ENCODE measurements at regions of chr17 and their contacts with region 1.

Region 1: DNA sequence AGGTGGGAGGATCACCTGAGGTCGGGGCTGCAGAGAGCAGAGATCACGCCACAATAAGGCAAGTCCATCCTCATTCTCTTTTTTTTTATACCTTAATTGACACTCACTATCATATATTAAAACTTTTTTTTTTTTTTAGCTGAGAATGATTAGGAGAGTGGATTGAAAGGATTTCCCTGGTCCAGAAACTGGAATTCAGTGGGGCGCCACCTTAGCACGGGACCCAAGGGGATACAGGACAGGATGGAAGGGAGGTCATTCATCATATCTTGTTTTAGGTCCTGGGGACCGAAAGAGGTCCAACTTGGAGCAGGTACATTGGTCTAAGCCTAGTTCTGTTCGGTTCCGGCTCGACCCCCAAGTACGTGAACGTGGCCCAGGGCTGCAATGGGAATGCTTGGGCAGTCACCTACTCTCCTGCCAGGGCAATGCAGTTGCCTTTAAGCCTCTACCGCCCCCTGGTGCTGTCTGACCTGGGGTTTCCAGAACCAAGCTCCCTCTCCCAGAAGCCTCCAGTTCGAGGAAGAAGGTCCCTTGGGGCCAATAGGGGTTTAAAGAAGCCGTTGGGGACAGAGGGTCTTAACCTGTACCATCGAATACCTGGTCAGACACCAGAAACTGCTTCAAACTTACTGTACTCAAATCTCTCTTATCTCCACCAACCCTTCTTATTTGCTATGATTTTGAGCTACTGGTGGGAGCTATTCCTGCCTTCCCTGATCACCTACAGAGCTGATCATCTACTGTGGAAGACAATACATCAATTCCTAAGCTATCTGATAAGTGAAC is 19.9 kb upstream of the GPATCH8 start:
- DNase-seq: peak; percentile 92
- H3K4me3 Mint-ChIP-seq: no peak overlapping the region
- H3K27ac Mint-ChIP-seq: peak overlapping the region; percentile 22
- H3K4me1 Mint-ChIP-seq: no peaks in the 10 kb centered on the region
- H3K27me3 Mint-ChIP-seq: peaks cover 19% of the 10 kb centered on the region
- CTCF ChIP-seq: peak; percentile 85

Region 2: GRCh38 chr17:44400226-44400847 is 122.7 kb before region 1 on chr17:
- CTCF ChIA-PET with region 1: interaction called, 4 read pairs
- intact Hi-C with region 1: loop called (anchors 2 kb)
- DNase-seq: peak; percentile 26
- H3K4me3 Mint-ChIP-seq: no peak overlapping the region
- H3K27ac Mint-ChIP-seq: peak overlapping the region; percentile 30
- H3K4me1 Mint-ChIP-seq: no peaks in the 10 kb centered on the region
- H3K27me3 Mint-ChIP-seq: no peaks in the 10 kb centered on the region
- CTCF ChIP-seq: no peak

Region 3: DNA sequence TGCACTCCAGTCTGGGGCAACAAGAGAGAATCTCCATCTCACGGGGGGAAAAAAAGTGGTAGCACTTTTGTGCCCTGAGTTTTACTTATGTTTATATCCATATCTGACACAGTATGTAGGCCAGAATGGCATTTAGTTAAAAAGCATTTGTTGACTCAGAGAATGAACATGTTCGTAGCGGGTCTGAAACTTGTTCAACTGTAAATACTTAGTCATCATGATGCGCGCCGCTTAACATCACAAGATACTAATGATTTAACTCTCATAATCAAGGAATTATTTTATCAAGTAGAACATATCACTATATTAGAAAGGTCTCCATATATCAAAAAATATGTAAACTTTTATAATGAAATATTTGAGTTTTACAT is 78.4 kb before region 1 on chr17:
- CTCF ChIA-PET with region 1: interaction called, 10 read pairs
- intact Hi-C with region 1: no loop called
- DNase-seq: no peak
- H3K4me3 Mint-ChIP-seq: no peak overlapping the region
- H3K27ac Mint-ChIP-seq: no peak overlapping the region
- H3K4me1 Mint-ChIP-seq: no peaks in the 10 kb centered on the region
- H3K27me3 Mint-ChIP-seq: no peaks in the 10 kb centered on the region
- CTCF ChIP-seq: no peak

Region 4: GRCh38 chr17:44533533-44534246 is 10.6 kb after region 1 on chr17:
- CTCF ChIA-PET with region 1: interaction called, 14 read pairs
- intact Hi-C with region 1: no loop called
- DNase-seq: peak; percentile 96
- H3K4me3 Mint-ChIP-seq: no peak overlapping the region
- H3K27ac Mint-ChIP-seq: peak overlapping the region; percentile 1
- H3K4me1 Mint-ChIP-seq: peaks cover 33% of the 10 kb centered on the region
- H3K27me3 Mint-ChIP-seq: peaks cover 26% of the 10 kb centered on the region
- CTCF ChIP-seq: peak; percentile 98

Region 5: GRCh38 chr17:44568945-44569858 is 46.1 kb after region 1 on chr17:
- CTCF ChIA-PET with region 1: no interaction called
- intact Hi-C with region 1: no loop called
- DNase-seq: no peak
- H3K4me3 Mint-ChIP-seq: no peak overlapping the region
- H3K27ac Mint-ChIP-seq: no peak overlapping the region
- H3K4me1 Mint-ChIP-seq: no peaks in the 10 kb centered on the region
- H3K27me3 Mint-ChIP-seq: no peaks in the 10 kb centered on the region
- CTCF ChIP-seq: no peak

Measured in Calu3 (cell line).